GM13976 (cell line): ENCODE measurements at regions of chr2 and their contacts with region 1.

Region 1: DNA sequence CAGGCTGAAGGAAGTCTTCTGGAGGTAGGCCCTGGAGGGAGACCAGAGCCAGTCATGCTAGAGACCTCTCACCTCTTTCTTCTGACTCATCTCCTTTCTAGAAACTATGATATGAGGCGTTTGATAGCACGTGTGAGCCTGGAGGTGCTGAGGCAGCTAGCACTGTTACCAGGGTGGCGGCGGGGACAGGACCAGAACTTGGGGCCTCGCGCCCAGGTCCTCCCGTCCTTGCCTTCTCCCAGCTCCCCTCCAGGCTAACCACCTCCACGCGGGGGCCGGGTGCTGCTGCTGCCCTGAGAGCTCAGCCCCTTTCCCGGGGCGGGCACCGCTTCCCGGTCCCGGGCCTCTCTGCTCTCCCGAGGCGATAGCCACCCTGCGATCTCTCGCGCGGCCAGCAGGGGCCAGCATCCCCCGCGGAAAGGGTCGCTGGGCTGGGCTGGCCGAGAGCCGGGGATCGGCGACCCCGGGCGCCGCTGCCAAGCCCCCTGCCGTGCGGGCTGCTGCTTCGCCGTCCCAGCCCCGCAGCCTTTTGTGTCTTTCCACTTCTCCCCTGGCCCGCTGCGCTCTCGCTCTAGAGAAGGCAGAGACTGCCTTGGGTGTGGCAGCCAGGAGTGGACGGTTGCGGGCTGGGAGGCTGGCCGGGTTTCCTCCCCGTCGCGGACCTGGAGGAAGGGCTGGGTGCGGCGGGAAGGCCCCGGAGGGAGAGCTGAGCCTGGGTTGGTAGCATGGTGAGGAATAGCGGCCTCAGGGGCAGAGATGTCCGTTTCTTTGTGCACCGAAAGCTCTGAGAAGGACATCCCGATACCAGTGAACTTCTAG is 49.1 kb downstream of the TMEM17 start:
- DNase-seq: peak; percentile 91
- CTCF ChIP-seq: peak; percentile 96

Region 2: GRCh38 chr2:63049970-63050333 is 593.0 kb after region 1 on chr2:
- in situ Hi-C with region 1: loop called (anchors 25 kb)
- DNase-seq: no peak
- CTCF ChIP-seq: no peak